Pancreas (tissue), 10 donors: ENCODE measurements at regions of chr4 and their contacts with region 1.

Region 1: GRCh38 chr4:69689599-69689998 is 36.6 kb upstream of the UGT2A1 start:
- DNase-seq: no peak
- ATAC-seq: peak in 3 of 4 donors; percentile 83 to 92 (median 88)
- H3K4me3 ChIP-seq: no peak overlapping the region
- H3K27ac ChIP-seq: no peak overlapping the region
- H3K4me1 ChIP-seq: no peaks in the 10 kb centered on the region
- H3K27me3 ChIP-seq: no peaks in the 10 kb centered on the region
- CTCF ChIP-seq: peak in 2 of 4 donors; percentile 41 to 54

Region 2: DNA sequence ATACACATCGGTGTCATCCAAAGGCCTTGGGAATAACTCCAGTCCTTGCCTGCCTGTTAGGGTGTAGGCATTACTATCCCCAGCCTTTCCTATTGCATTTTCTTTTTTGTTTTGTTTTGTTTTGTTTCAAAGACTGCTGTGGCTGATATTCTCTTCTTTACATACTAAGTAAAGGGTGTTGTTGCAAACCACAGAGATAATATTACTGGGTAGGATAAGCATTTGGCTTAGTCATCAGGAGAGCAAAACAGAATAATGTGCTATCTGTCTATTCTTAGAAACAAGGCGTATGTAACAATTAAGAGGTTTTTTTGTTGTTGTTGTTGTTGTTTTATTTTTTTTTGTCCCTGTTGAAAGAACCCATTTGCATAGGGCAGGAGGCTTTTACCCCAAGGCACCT is 367.5 kb before region 1 on chr4:
- intact Hi-C with region 1: no loop called
- DNase-seq: no peak
- ATAC-seq: peak; percentile 12 to 35 (median 28)
- H3K4me3 ChIP-seq: no peak overlapping the region
- H3K27ac ChIP-seq: peak overlapping the region in 1 of 4 donors; percentile 55
- H3K4me1 ChIP-seq: peaks cover 8 to 16% (median 10%) of the 10 kb centered on the region in 3 donors
- H3K27me3 ChIP-seq: no peaks in the 10 kb centered on the region
- CTCF ChIP-seq: no peak

Region 3: GRCh38 chr4:69876071-69876470 is 186.5 kb after region 1 on chr4:
- intact Hi-C with region 1: loop called (anchors 5 kb)
- DNase-seq: no peak
- ATAC-seq: peak in 1 of 4 donors; percentile 18
- H3K4me3 ChIP-seq: no peak overlapping the region
- H3K27ac ChIP-seq: no peak overlapping the region
- H3K4me1 ChIP-seq: no peaks in the 10 kb centered on the region
- H3K27me3 ChIP-seq: no peaks in the 10 kb centered on the region
- CTCF ChIP-seq: no peak

Region 4: GRCh38 chr4:69881173-69881773 is 191.7 kb after region 1 on chr4:
- intact Hi-C with region 1: loop called (anchors 5 kb)
- DNase-seq: peak in 4 of 6 donors; percentile 3 to 32 (median 17)
- ATAC-seq: peak; percentile 87 to 99 (median 97)
- H3K4me3 ChIP-seq: no peak overlapping the region
- H3K27ac ChIP-seq: no peak overlapping the region
- H3K4me1 ChIP-seq: no peaks in the 10 kb centered on the region
- H3K27me3 ChIP-seq: no peaks in the 10 kb centered on the region
- CTCF ChIP-seq: peak; percentile 22 to 81 (median 70)